Endothelial cell of umbilical vein (primary cell): ENCODE measurements at regions of chr21 and their contacts with region 1.

Region 1: DNA sequence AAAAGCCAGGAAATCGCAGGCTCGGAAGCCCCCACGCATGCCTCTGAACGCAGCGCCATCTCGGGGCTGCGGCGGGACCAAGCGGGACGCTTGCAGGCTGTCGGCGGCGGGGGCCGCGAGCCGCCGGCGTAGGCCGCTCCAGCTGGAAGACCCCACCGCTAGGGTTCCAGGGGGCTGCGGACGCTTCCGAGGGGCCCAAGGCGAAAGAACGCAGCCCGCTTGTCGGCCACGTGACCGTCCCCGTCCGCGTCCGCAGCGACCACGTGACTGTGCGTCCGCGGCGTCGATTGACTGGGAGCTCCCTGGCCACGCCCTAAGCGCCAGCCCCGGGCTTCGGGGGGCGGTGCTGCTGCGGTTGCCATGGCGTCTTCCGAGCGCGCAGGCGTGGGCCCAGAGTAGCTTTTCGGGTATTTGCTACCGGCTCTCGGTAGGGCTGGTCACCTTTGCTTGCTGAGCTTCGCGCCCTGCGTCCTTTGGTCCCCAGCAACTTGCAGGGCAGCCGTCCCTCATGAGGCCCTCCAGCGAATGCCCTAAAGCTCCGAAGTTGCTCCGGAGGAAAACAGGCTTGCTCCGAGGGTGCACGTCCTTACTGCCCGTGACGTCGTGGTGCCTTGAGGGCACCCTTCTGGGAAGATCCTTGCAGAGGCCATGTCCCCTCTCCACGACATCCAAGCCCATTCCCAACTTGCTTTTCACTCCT is 197.2 kb downstream of the DYRK1A start:
- DNase-seq: peak; percentile 93
- H3K4me3 ChIP-seq: peak overlapping the region; percentile 9 to 54 (median 49)
- H3K27ac ChIP-seq: peak overlapping the region; percentile 81
- H3K4me1 ChIP-seq: peaks cover 14% of the 10 kb centered on the region
- H3K27me3 ChIP-seq: peaks cover under 1 to 3% of the 10 kb centered on the region in 2 experiments
- CTCF ChIP-seq: peak; percentile 37 to 44
- POLR2A ChIP-seq: peak; percentile 89

Region 2: DNA sequence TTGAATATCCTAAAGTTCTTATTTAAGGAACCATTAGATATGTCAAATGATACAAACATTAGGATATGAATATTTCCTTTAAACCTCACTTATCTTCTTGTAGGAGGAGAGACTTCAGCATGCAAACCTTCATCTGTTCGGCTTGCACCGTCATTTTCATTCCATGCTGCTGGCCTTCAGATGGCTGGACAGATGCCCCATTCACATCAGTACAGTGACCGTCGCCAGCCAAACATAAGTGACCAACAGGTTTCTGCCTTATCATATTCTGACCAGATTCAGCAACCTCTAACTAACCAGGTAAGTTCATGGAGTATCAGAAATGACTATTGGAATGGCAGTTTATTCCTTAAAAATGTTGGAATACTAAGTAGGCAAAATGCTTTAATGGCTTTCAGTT is 91.2 kb before region 1 on chr21:
- CTCF ChIA-PET with region 1: no interaction called
- POLR2A ChIA-PET with region 1: no interaction called
- dilution Hi-C with region 1: no loop called
- intact Hi-C with region 1: no loop called
- DNase-seq: no peak
- H3K4me3 ChIP-seq: no peak overlapping the region
- H3K27ac ChIP-seq: no peak overlapping the region
- H3K4me1 ChIP-seq: peaks cover 4% of the 10 kb centered on the region
- H3K27me3 ChIP-seq: no peaks in the 10 kb centered on the region
- CTCF ChIP-seq: no peak
- POLR2A ChIP-seq: no peak

Region 3: DNA sequence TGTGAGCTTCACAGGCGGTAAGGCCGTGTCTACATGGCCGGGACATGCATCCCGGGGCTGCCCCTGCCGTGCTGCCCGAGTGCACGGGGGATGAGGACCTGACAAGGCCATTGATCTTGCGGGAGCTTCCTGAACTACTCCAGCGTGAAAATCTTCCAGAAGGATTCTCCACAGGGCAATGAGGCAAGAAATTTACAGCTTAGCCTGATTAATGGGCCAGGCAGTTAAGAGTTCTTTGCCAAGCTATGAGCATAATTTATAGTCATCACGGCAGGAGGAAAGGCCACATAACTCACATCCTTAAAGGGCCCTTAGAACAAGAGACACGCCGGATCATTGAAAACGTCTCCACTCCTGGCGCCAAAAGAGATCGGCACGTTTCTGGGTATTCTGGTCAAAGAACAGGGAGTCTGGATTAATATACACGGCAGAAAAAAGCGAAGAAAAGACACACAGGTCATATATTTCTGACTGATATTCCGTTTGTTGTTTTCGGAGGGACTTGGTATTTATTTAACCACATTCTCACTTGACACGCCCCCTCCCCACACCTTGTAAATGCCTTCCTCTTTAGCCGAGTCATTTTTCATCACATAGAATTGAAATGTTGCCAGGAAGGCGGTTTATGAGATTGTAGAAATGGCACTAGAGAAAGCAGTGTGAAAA is 16.7 kb before region 1 on chr21:
- CTCF ChIA-PET with region 1: interaction called, 10 read pairs
- POLR2A ChIA-PET with region 1: interaction called, 9 read pairs
- dilution Hi-C with region 1: no loop called
- intact Hi-C with region 1: loop called (anchors 1 kb)
- DNase-seq: peak; percentile 86
- H3K4me3 ChIP-seq: peak overlapping the region in 1 of 3 experiments; percentile 2
- H3K27ac ChIP-seq: peak overlapping the region; percentile 92
- H3K4me1 ChIP-seq: peaks cover 22% of the 10 kb centered on the region
- H3K27me3 ChIP-seq: no peaks in the 10 kb centered on the region
- CTCF ChIP-seq: no peak
- POLR2A ChIP-seq: peak; percentile 30

Region 4: DNA sequence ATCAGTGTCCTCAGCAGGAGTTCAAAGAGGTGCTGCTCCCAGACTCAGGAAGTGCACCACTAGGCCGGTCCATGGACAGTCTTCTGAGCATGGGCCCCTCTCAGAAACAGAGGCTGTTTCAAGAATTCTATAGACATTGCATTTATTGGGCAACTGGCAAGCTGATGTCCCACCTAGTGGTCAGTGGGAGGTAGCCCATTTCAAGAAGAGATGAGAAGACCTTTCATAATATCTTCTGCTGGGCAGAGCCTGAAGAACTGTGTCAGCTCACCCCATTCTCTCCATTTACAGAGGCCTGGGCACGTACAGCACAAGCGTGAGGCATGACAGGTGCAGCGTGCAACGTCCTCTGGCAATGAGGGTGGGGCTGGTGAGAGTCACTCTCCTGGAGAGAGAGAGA is 18.8 kb after region 1 on chr21:
- CTCF ChIA-PET with region 1: interaction called, 10 read pairs
- POLR2A ChIA-PET with region 1: interaction called, 7 read pairs
- dilution Hi-C with region 1: no loop called
- intact Hi-C with region 1: loop called (anchors 1 kb)
- DNase-seq: peak; percentile 69
- H3K4me3 ChIP-seq: no peak overlapping the region
- H3K27ac ChIP-seq: no peak overlapping the region
- H3K4me1 ChIP-seq: peaks cover 13% of the 10 kb centered on the region
- H3K27me3 ChIP-seq: no peaks in the 10 kb centered on the region
- CTCF ChIP-seq: peak; percentile 68 to 76
- POLR2A ChIP-seq: no peak

Region 5: GRCh38 chr21:37642493-37642892 is 78.7 kb after region 1 on chr21:
- CTCF ChIA-PET with region 1: interaction called, 8 read pairs
- POLR2A ChIA-PET with region 1: interaction called, 3 read pairs
- dilution Hi-C with region 1: no loop called
- intact Hi-C with region 1: loop called (anchors 1 kb)
- DNase-seq: no peak
- H3K4me3 ChIP-seq: no peak overlapping the region
- H3K27ac ChIP-seq: no peak overlapping the region
- H3K4me1 ChIP-seq: peaks cover 38% of the 10 kb centered on the region
- H3K27me3 ChIP-seq: no peaks in the 10 kb centered on the region
- CTCF ChIP-seq: no peak
- POLR2A ChIP-seq: no peak

Region 6: GRCh38 chr21:37658817-37659458 is 95.1 kb after region 1 on chr21:
- CTCF ChIA-PET with region 1: interaction called, 15 read pairs
- POLR2A ChIA-PET with region 1: no interaction called
- dilution Hi-C with region 1: no loop called
- intact Hi-C with region 1: loop called (anchors 1 kb)
- DNase-seq: peak; percentile 95
- H3K4me3 ChIP-seq: no peak overlapping the region
- H3K27ac ChIP-seq: peak overlapping the region; percentile 72
- H3K4me1 ChIP-seq: peaks cover 22% of the 10 kb centered on the region
- H3K27me3 ChIP-seq: no peaks in the 10 kb centered on the region
- CTCF ChIP-seq: peak; percentile 51 to 62
- POLR2A ChIP-seq: no peak

Region 7: DNA sequence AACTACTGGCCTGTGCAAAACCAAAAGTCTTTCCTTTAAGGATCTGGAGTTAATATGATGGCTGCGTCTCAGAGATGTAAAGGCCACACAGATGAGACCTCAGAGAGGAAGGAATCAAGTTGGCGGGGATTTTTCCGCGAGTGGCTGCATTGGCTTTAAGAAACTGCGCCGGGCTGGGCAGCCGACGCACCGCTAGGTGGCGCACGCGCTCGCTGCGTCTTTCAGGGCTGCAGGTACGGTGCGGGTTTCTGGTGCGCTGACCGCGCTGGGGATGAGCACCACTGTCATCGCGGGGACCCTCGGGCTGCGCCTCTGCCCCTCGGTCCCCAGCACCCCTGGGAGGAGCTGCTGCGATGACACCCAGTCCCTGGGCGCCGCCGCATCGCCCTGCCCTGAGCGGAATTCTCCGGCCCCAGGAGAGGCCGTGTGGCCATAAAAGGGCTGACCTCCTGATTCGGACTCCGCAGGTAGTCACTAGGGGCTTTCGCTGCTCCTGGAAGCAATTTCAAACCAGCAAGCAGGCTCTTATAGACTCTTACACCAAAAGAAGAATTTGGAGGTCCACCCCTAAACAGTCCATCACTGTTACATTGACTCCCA is 111.5 kb after region 1 on chr21:
- CTCF ChIA-PET with region 1: interaction called, 17 read pairs
- POLR2A ChIA-PET with region 1: no interaction called
- dilution Hi-C with region 1: no loop called
- intact Hi-C with region 1: no loop called
- DNase-seq: peak; percentile 48
- H3K4me3 ChIP-seq: no peak overlapping the region
- H3K27ac ChIP-seq: no peak overlapping the region
- H3K4me1 ChIP-seq: peaks cover 3% of the 10 kb centered on the region
- H3K27me3 ChIP-seq: peaks cover 4 to 13% of the 10 kb centered on the region in 2 experiments
- CTCF ChIP-seq: peak; percentile 95 to 96
- POLR2A ChIP-seq: no peak

Region 8: GRCh38 chr21:37695111-37695510 is 131.3 kb after region 1 on chr21:
- CTCF ChIA-PET with region 1: no interaction called
- POLR2A ChIA-PET with region 1: no interaction called
- dilution Hi-C with region 1: no loop called
- intact Hi-C with region 1: no loop called
- DNase-seq: no peak
- H3K4me3 ChIP-seq: no peak overlapping the region
- H3K27ac ChIP-seq: no peak overlapping the region
- H3K4me1 ChIP-seq: no peaks in the 10 kb centered on the region
- H3K27me3 ChIP-seq: peaks cover 18% of the 10 kb centered on the region in 2 experiments
- CTCF ChIP-seq: no peak
- POLR2A ChIP-seq: no peak